ENCODE measurements at regions of chr10 and their contacts with region 1.

Region 1: DNA sequence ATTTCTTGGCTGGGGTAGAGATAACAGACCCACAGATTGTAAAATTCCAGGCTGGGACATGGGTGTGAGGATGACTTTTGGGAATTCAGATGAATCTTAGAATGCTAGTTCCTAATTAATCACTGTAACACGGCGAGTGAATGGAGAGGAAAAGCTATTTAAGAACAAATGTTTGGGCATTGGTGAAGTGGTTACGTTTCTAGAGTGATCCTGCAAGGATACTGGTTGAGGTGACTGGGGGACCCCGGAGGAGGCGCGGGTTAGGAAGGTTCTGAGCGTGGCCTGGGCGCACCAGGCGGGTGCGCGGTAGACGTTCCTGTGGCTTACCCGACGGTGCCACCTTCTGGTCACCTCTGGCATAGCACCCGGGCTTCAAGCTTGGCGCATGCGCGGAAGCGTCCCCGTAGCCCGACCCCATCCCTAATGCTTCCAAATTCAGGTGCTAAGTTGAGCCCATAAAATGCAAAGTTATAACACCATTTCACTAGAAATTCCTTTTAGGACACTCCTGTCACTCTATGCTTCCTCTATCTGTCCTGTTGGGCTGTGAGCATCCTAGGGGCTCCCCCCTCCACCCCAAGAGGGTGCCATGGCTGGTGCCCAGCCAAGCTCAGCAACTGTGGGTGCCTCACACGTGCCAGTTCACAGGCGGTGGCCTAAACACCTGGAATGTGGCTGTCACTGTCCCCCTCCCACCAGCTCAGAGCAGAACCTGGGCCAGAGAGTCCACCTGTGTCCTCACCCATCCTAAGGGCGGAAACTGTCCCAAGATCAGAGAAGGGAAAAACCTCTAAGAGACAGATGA is 104.5 kb downstream of the PTPRE start:
- DNase-seq: peak; percentile 80 to 88 (median 81)
- H3K4me3 ChIP-seq: no peak overlapping the region
- H3K4me3 Mint-ChIP-seq: peak overlapping the region in 2 of 7 donors; percentile 3 to 6
- H3K27ac ChIP-seq: no peak overlapping the region
- H3K27ac Mint-ChIP-seq: no peak overlapping the region
- H3K4me1 ChIP-seq: peaks cover 7% of the 10 kb centered on the region
- H3K4me1 Mint-ChIP-seq: peaks cover 8 to 9% (median 8%) of the 10 kb centered on the region in 3 donors
- H3K27me3 ChIP-seq: peaks cover 3% of the 10 kb centered on the region
- H3K27me3 Mint-ChIP-seq: peaks cover 4 to 24% of the 10 kb centered on the region in 2 donors

Region 2: DNA sequence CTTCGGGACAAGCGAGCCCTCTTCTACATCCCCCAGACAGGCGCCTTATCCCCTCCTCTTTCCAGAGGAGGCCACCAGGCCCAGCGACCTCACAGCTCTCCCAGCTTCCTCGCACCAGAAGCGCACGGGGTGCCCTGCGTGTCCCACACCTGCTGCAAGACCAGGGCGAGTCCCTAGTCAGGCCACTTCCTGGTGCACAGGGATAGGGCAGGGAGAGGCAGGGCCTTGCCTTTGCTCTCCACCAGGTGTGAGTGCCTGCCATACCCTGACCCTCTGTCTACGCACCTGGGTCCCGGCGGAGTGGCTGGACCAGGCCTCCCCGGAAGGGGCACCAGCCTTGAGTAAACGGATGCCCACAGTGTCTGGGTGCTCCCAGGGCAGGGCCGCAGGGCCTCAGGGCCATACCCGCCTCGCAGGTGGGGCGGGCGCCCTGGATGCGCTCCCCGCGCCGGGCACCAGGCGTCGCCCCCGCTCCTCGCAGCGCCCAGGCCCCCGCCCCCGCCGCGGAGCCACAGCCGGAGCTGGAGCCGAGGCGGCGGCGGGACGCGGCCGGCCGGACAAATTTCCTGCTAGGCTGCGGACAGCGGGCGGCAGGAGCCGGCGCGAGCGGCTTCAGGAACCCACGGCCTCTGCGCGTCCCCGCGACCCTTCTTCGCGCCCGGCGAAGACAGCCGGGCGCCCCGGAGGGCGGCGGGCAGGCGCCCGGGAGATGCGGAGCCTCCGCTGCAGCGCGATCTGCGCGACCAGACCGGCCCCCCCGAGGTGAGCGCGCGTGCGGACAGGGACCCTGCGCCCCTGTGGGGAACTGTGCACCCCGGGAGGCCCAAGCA is 104.6 kb before region 1 on chr10 and contains the start of gene PTPRE:
- CTCF ChIA-PET with region 1: interaction called, 16 read pairs
- POLR2A ChIA-PET with region 1: no interaction called
- DNase-seq: peak; percentile 21 to 53 (median 43)
- H3K4me3 ChIP-seq: no peak within 1 kb of the TSS
- H3K4me3 Mint-ChIP-seq: peak within 1 kb of the TSS in 6 of 7 donors; percentile 28 to 59 (median 48)
- H3K27ac ChIP-seq: no peak within 1 kb of the TSS
- H3K27ac Mint-ChIP-seq: no peak within 1 kb of the TSS
- H3K4me1 ChIP-seq: no peaks in the 10 kb centered on the region
- H3K4me1 Mint-ChIP-seq: no peaks in the 10 kb centered on the region
- H3K27me3 ChIP-seq: peaks cover 11% of the 10 kb centered on the region
- H3K27me3 Mint-ChIP-seq: peaks cover 31 to 51% of the 10 kb centered on the region in 2 donors
- total RNA-seq, gene PTPRE: 25.2 to 29.5 TPM

Region 3: DNA sequence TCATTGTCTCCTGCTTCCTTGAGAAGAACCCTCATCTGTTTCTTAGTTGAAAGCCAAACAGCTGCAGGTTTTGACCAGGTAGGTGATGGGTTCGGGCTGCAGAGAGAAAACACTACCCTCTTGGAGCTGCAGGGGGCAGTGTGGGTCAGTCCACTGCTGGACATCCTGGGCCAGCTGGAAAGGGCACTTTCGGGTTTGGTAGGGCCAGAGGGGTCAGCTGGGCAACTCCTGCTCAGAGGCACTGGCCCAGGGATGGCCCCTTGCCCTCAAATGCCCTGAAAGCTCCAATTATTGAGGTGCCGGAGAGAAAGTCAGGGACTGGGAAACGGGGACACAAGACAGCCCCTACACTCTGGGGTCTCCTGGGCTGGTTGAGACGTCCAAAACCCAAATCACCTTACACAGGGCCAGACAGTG is 24.2 kb after region 1 on chr10:
- CTCF ChIA-PET with region 1: interaction called, 25 read pairs
- POLR2A ChIA-PET with region 1: no interaction called
- DNase-seq: peak; percentile 52 to 69 (median 59)
- H3K4me3 ChIP-seq: no peak overlapping the region
- H3K4me3 Mint-ChIP-seq: no peak overlapping the region
- H3K27ac ChIP-seq: no peak overlapping the region
- H3K27ac Mint-ChIP-seq: no peak overlapping the region
- H3K4me1 ChIP-seq: no peaks in the 10 kb centered on the region
- H3K4me1 Mint-ChIP-seq: peaks cover 0 to 6% (median 3%) of the 10 kb centered on the region in 3 donors
- H3K27me3 ChIP-seq: no peaks in the 10 kb centered on the region
- H3K27me3 Mint-ChIP-seq: no peaks in the 10 kb centered on the region

Measured in CD8-positive, alpha-beta memory T cell (primary cell).